Transverse colon (tissue), 4 donors: ENCODE measurements at regions of chr7 and their contacts with region 1.

Region 1: DNA sequence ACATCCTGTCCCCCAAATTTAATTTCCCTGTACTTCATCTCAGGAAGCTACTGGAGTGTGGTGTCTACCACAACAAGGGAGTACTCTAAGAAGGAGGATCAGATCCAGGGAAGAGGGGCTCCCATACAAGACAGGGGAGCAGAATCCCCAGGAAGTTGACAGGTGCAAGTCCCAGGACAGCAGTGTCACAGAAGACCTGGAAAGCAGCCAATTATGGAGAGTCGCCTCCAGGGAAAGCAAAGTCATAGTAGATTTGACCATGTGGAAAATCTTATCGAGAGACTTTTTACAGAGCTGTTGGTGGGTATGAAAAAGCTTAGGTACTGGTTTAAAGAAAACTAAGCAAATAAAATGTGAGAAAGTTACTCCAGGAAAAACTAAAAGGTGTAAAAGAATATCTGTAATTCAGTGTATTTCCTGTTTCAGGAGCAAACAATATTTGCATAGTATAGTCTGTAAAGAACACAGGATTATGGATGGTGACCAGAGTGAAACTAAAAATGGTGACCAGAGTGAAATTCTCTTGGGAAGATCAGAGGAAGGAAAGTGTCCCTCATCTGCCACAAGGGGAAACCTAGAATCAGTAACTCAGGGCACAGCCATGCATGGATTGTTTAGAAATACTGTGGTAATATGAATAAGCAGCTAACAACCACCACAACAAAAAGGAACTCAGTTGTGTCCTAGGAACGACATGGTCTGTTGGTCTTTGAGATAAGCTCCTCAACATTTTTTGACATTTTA is 44.5 kb downstream of the LANCL2 start:
- DNase-seq: no peak
- H3K4me3 ChIP-seq: peak overlapping the region in 1 of 4 donors; percentile 23
- H3K27ac ChIP-seq: peak overlapping the region; percentile 43 to 73 (median 52)
- H3K4me1 ChIP-seq: peaks cover 0 to 15% (median 3%) of the 10 kb centered on the region in 4 donors
- H3K27me3 ChIP-seq: no peaks in the 10 kb centered on the region
- CTCF ChIP-seq: peak in 1 of 5 experiments; percentile 24
- EP300 ChIP-seq: no peak
- POLR2A ChIP-seq: no peak

Region 2: DNA sequence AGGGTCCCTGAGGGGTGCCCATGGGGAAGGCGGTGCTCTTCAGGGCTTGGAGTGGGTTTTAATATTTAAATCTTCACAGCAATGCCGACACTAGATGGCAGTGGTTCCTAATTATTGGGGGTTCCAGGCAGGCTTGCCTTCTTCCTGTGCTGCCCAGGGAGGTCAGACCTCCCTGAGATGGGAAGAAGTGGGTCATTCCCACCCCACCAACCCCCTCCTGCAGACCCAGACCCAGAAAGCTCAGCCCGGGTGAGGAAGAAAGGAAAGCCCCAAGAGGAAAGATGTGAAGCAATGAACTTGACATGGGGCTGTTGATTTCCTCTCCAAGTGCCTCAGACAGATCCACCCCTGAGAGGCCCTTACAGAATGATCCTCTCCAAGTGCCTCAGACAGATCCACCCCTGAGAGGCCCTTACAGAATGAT is 129.6 kb before region 1 on chr7:
- in situ Hi-C with region 1: loop called (anchors 5 to 25 kb)
- intact Hi-C with region 1: no loop called
- DNase-seq: peak; percentile 65
- H3K4me3 ChIP-seq: no peak overlapping the region
- H3K27ac ChIP-seq: no peak overlapping the region
- H3K4me1 ChIP-seq: no peaks in the 10 kb centered on the region
- H3K27me3 ChIP-seq: no peaks in the 10 kb centered on the region
- CTCF ChIP-seq: peak; percentile 63 to 67 (median 65)
- EP300 ChIP-seq: no peak
- POLR2A ChIP-seq: no peak

Region 3: DNA sequence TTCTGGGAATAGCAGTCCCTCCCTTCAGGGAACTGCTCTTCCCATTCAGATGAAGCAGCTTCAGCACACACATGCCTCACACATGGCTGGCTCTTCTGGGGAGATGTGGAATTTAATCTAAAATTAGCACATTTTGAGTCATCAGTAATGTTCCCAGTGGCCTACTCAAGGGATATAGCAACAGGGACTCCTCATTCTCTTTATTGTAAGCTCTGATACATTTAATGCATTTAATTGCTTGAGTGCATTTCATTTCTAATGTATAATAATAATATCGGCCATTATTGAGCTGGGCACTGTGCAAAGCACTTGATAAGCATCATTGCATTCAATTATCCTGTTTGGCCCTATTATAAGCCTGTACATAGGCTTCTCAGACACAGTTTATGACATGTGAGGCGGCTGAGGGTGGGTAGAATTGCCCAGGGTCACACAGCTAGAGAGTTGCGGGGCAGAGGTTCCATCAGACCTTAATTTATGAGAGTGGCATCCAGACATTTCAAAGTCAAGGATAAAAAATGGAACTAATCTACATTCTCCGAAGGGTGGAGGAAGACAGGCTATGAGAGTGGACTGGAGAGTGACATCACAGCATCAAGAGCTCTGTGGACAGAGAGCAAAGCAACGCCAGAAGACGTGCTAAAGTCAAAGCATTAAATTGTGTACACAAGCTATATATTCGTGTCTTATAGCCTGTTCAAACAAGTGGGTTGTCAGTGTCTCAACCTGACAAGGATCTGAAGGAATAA is 32.3 kb after region 1 on chr7:
- in situ Hi-C with region 1: no loop called
- intact Hi-C with region 1: no loop called
- DNase-seq: no peak
- H3K4me3 ChIP-seq: no peak overlapping the region
- H3K27ac ChIP-seq: no peak overlapping the region
- H3K4me1 ChIP-seq: peaks cover 0 to 4% (median 0%) of the 10 kb centered on the region in 4 donors
- H3K27me3 ChIP-seq: no peaks in the 10 kb centered on the region
- CTCF ChIP-seq: no peak
- EP300 ChIP-seq: no peak
- POLR2A ChIP-seq: no peak